ENCODE measurements at regions of chr4 and their contacts with region 1.

Region 1: GRCh38 chr4:176123710-176124407 is 58.2 kb downstream of the WDR17 start:
- DNase-seq: no peak
- H3K4me3 ChIP-seq: no peak overlapping the region
- CTCF ChIP-seq: peak; percentile 53

Region 2: DNA sequence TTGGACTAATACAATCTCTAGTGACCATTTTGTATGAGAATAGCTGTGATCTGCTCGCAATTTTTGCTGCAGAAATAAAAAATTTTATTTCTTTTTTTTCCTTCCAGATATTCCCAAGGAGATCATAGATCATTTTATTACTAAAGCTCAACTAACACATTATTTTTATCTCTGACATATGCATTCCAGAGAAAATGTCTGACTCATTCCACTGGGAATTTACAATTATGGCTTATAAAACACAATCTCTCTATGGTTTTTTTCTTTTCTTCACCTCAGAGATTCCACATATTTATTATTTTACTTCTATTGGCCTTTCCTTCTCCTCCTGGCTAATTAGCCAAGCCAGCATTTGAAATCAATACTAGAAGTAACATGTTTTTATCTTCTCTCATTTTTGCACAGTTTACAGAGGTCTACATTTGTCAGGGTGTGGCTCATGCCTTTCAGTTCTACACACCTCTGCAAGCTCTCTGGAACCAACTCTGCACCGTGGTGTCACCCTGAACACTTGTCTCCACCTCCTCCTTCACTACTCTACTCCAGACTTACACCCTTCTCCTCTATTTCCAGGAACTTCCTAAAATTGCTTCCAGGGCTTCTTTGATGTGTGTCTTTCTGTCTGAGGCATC is 252.0 kb before region 1 on chr4:
- CTCF ChIA-PET with region 1: no interaction called
- POLR2A ChIA-PET with region 1: no interaction called
- DNase-seq: no peak
- H3K4me3 ChIP-seq: no peak overlapping the region
- CTCF ChIP-seq: no peak

Region 3: DNA sequence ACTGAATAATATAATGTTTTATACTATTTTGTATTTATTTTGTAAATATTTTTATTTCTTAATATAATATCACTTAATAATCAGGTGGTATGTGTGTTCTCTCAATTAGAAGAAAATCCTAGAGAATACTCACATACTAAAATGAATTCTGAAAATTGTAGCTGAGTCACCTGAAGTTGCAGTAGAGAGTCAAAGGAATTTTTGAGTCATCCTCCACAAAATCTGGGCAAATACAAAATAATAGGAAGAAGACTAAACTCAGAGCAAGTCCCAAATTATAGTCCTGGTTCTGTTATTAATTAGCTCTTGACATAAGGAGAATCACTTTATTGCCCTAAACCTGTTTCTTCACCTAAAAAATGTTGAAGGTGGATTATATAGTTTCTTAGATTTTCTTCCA is 13.8 kb after region 1 on chr4:
- CTCF ChIA-PET with region 1: interaction called, 12 read pairs
- POLR2A ChIA-PET with region 1: no interaction called
- DNase-seq: no peak
- H3K4me3 ChIP-seq: no peak overlapping the region
- CTCF ChIP-seq: no peak